ENCODE measurements at regions of chr1 and their contacts with region 1.

Region 1: GRCh38 chr1:13948888-13949391 is 249.0 kb downstream of the PRDM2 start:
- DNase-seq: no peak
- ATAC-seq: peak in 2 of 4 donors; percentile 27 to 56
- H3K4me3 ChIP-seq: no peak overlapping the region
- H3K27ac ChIP-seq: no peak overlapping the region
- H3K4me1 ChIP-seq: no peaks in the 10 kb centered on the region
- H3K27me3 ChIP-seq: no peaks in the 10 kb centered on the region
- CTCF ChIP-seq: no peak

Region 2: DNA sequence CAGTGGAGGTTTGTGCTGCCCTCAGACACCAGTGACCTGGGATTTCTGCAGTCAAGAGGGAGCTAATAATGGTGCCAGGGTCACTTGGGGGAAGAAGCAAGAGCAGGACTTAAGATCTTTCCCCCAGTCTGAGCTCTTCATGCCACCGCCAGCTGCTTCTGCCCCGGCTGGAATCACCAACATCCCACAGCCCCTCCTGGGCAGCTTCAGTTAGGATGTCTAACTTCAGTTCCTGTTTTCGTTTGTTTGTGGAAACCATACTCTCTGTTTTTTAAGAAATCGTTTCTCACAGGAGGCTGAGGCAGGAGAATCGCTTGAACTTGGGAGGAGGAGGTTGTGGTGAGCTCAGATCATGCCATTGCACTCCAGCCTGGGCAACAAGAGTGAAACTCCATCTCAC is 274.6 kb before region 1 on chr1:
- intact Hi-C with region 1: loop called in 1 of 3 experiments (anchors 5 kb)
- DNase-seq: no peak
- ATAC-seq: no peak
- H3K4me3 ChIP-seq: no peak overlapping the region
- H3K27ac ChIP-seq: no peak overlapping the region
- H3K4me1 ChIP-seq: no peaks in the 10 kb centered on the region
- H3K27me3 ChIP-seq: no peaks in the 10 kb centered on the region
- CTCF ChIP-seq: no peak

Measured in pancreas (tissue), 10 donors.